GM23248 (cell line): ENCODE measurements at regions of chr14 and their contacts with region 1.

Region 1: DNA sequence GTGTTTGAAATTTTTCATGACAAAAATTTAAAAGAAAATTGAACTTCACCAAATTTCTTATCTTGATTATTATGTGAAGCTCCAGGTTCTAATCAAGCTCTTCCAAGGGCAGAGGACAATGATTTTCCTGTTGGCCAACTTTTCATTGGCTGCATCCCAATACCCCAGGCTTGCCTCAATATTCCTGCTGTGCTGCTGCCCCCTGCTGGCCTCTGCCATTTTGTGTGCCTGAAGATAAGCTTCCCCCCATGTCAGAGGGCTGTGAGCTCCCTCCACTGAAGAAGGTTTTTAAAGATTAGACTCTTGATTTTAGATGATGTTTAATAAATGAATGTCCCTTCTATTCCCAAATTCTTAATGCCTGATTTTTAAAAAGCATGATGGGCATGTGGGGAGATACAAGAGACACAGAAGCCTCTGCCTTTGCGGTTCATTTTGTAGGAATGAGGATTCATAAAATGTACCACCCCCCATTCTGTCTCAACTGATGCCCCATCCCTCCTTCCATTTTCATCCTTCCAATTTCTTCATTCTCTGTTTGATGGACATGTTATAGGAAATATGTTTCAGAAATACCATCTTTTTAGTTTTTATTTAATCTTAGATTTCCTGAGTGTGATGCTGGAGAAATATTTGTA is 76.7 kb upstream of the RGS6 start:
- DNase-seq: peak; percentile 76
- H3K4me3 ChIP-seq: no peak overlapping the region
- H3K27ac ChIP-seq: no peak overlapping the region
- H3K4me1 ChIP-seq: no peaks in the 10 kb centered on the region
- H3K27me3 ChIP-seq: peaks cover 5% of the 10 kb centered on the region

Region 2: GRCh38 chr14:71103662-71104484 is 751.6 kb before region 1 on chr14:
- in situ Hi-C with region 1: loop called (anchors 25 kb)
- DNase-seq: peak; percentile 74
- H3K4me3 ChIP-seq: no peak overlapping the region
- H3K27ac ChIP-seq: no peak overlapping the region
- H3K4me1 ChIP-seq: no peaks in the 10 kb centered on the region
- H3K27me3 ChIP-seq: no peaks in the 10 kb centered on the region

Region 3: DNA sequence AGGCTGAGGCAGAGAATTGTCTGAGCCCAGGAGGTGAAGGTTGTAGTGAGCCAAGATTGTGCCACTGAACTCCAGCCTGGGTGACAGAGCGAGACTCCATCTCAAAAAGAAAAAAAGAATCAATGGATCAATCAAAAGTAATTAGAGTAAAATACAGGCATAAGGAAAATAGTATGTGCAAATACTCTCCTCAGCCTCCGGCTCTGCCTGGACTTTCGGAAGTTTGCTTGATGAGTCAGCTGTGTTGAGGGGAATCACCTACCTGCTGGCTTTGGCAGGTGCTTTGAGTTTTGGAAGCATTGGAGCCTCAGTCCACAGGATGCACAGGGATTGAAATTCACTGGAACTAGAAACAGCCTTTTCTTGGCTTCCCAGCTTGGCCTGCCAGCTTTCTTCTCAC is 680.1 kb before region 1 on chr14:
- in situ Hi-C with region 1: no loop called
- DNase-seq: no peak
- H3K4me3 ChIP-seq: no peak overlapping the region
- H3K27ac ChIP-seq: no peak overlapping the region
- H3K4me1 ChIP-seq: no peaks in the 10 kb centered on the region
- H3K27me3 ChIP-seq: no peaks in the 10 kb centered on the region

Region 4: GRCh38 chr14:72142328-72142727 is 286.8 kb after region 1 on chr14:
- in situ Hi-C with region 1: no loop called
- DNase-seq: no peak
- H3K4me3 ChIP-seq: no peak overlapping the region
- H3K27ac ChIP-seq: no peak overlapping the region
- H3K4me1 ChIP-seq: no peaks in the 10 kb centered on the region
- H3K27me3 ChIP-seq: no peaks in the 10 kb centered on the region

Region 5: DNA sequence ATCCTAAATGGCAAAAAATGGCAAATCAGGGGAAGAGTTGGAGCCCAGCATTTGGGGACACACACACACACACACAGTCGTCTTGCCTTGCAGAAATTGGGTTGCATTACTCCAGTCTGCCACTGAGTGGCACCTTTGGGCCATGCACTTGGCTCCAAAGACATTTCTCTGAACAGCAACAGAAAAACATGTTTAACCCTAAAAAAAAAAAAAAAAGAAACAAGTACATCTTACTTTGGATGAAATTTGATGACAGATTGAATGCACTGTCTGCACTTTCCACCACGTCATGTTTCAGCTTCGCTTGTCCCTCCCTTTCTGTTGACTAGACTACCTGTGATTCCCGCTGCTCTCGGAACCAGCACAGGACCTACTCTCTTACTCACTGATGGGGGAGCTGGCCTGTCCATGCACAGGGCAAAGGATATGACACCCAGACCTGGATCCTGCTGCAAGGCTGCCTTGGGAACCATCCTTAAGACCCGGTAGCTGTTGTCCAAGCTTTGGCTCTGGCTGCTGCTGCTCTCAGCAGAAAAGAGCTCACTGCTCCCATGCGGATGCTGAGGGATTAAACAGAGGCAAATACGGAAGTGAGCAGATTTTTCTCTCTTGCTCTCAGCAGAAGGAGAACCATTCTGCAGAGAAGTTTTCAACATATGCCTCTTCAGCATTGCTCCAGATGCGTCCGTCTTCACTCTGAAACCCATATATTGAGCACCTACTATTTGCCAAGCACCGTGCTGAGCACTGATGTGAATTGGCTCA is 661.6 kb after region 1 on chr14:
- in situ Hi-C with region 1: no loop called
- DNase-seq: peak; percentile 85
- H3K4me3 ChIP-seq: no peak overlapping the region
- H3K27ac ChIP-seq: no peak overlapping the region
- H3K4me1 ChIP-seq: peaks cover 15% of the 10 kb centered on the region
- H3K27me3 ChIP-seq: no peaks in the 10 kb centered on the region